ENCODE measurements at regions of chr12 and their contacts with region 1.

Region 1: DNA sequence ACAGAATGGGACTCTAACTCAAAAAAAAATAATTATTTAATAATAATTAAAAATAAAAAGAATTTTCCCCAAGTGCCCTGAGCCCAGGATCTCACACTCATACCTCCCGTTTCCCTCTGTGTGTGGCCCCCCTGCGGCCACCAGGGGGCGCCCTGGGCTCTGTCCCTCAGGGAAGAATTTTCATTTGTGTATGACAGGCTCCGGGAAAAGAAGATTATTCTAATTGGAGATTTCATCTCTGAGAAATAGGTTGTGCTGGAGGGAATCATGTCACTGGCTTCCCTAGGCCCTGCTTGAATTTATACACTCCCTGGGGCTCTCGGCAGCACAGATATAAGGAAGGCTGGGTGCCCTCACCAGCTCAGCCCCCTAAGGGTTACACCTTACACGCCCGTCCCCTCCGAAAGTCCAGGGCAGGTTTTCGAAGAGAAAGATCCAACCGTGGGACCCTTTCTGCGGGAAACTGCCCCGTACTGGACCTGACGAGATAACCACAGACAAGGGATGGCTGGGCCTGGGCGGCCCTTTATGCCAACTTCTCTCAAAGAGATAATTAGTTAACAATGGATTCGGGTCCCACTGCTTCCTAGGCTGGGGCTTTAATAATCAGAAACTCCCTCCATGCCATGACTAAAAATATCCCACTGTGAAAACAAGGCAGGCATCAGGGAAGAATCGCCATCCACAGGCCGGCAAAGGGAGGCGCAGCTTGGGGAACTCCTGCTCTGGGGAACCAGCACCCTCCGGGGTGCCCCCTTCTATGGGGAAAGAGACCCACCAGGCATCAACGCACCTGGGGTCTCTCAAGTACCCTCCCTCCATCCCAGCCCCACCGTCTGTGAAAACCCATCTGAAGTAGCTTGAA is 80.7 kb downstream of the KDM2B start:
- DNase-seq: peak; percentile 86
- H3K4me3 ChIP-seq: no peak overlapping the region
- H3K27ac ChIP-seq: peak overlapping the region in 1 of 2 donors; percentile 41
- H3K4me1 ChIP-seq: peaks cover 6% of the 10 kb centered on the region
- H3K27me3 ChIP-seq: no peaks in the 10 kb centered on the region
- CTCF ChIP-seq: peak; percentile 72 to 99 (median 89)
- POLR2A ChIP-seq: no peak

Region 2: DNA sequence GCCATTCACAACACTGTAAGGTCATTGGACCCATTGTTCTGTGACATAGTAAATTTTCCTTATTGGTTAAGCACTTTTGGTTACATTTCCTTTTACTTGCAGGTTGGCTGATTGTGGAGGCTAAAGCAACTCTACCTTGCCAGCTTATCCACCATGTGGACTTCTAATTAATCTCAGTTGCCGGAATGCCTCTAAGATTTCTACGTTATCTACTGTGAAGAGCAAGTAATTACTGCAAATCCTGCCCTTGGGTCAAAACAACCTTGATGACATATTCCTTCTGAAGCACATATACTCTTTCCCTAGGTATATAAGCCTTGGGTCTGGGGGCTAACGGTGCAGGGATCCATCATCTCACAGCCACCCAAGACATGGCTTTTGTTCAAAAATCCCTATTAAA is 188.8 kb after region 1 on chr12:
- intact Hi-C with region 1: loop called (anchors 10 kb)
- DNase-seq: no peak
- H3K4me3 ChIP-seq: no peak overlapping the region
- H3K27ac ChIP-seq: no peak overlapping the region
- H3K4me1 ChIP-seq: no peaks in the 10 kb centered on the region
- H3K27me3 ChIP-seq: no peaks in the 10 kb centered on the region
- CTCF ChIP-seq: no peak
- POLR2A ChIP-seq: no peak